ENCODE measurements at regions of chr10 and their contacts with region 1.

Region 1: DNA sequence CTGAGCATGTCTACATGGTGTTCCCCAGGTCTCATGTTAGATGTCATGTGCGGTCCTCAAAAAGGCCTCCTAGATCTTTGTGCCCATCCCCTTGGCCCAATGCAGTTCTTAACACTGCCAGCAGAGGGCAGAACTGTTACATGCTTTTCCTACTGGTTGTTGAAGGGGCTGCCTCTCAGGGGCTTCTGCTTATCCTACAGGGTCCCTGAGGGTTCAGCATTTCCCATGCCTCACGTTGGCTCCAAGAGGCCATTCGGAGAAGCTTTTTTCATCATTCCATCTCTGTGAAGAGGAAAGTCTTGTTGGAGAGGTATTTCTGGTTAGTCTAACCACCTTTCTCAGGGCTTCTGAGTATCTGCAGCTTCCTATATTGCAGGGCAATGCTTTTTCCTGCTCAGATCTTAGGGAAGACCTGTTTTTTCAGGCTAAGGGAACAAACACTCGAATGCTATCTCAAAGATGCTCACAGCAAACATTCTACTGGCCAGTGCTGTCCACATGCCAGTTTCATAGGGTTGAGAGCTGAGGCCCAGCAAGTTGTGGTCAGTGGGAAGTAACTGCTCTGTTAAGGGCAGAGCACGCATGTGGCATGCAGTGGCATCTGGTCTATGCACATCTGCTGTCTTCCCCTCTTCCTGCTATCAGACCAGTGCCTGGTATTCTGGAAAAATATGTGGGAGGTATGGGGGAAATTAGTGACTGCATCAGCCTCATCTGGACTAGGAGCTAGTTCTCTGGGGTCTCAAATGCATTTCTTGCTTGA is 31.5 kb downstream of the MBL2 start:
- DNase-seq: peak in 6 of 10 donors; percentile 12 to 62 (median 49)

Region 2: DNA sequence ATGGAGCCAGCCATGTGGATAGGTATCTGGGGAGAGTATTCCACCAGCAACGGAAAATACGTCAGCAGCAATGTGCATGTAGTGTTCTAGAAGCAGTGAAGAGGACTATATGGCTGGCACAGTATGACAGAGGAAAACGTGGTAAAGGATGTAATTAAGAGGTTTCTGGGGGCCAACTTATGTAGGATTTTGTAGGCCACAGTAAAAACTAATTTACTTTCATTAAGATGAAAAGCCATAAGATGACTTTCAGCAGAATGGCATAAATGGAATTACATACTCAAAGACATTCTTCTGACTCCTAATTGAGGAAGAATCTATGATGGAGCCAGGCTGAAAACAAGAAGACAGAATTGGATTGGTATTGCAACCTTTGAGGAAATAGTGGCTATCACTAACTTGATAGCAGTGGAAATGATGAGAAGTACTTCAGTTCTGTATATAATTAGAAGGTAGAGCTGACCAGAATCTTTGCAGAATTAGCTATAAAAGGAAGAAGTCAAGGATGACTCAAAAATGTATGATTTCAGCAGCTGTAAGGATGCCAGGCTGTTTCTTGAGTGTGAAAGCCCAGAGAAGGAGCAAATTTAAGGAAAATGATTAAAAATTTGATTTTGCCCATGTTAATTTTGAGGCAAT is 125.2 kb before region 1 on chr10:
- intact Hi-C with region 1: no loop called
- DNase-seq: no peak

Region 3: GRCh38 chr10:52779541-52780390 is 38.7 kb after region 1 on chr10:
- intact Hi-C with region 1: loop called (anchors 2 kb)
- DNase-seq: peak; percentile 41 to 94 (median 78)

Region 4: GRCh38 chr10:52918714-52919305 is 177.7 kb after region 1 on chr10:
- intact Hi-C with region 1: no loop called
- DNase-seq: no peak

Measured in posterior cingulate gyrus (tissue), 11 donors.